Endothelial cell of umbilical vein (primary cell): ENCODE measurements at regions of chr2 and their contacts with region 1.

Region 1: DNA sequence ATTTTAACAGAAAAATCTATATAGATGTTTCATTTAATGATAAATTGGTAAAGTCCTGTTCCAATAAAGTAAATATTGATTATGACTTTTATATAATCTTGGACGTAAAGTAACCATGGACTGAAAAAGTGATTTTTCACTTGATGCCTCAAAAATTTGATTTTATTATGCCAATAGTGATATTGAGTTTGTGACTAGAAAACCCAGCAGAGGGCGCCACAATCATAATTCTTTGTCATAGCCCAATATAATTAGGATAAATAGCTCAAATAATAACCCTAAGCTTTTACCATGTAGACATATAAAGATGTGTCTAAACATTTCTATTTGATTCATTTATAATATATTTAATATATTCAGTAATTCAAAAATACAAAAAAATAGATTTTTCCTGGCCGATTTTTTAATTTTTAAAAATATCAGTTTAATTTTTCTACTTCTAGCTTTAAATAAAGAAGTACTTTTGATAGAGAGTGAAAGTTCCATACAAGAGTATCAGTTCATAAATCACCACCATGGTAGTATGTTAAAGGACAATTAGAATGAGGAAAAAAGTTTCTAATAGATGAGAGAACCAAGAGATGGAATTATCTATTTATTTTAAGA is 30.7 kb downstream of the CAMKMT start:
- DNase-seq: peak; percentile 46
- H3K4me3 ChIP-seq: no peak overlapping the region
- H3K27ac ChIP-seq: no peak overlapping the region
- H3K4me1 ChIP-seq: no peaks in the 10 kb centered on the region
- H3K27me3 ChIP-seq: no peaks in the 10 kb centered on the region
- CTCF ChIP-seq: peak; percentile 36 to 38
- POLR2A ChIP-seq: no peak

Region 2: GRCh38 chr2:44044281-44044720 is 348.1 kb before region 1 on chr2:
- CTCF ChIA-PET with region 1: interaction called, 26 read pairs
- POLR2A ChIA-PET with region 1: no interaction called
- dilution Hi-C with region 1: no loop called
- intact Hi-C with region 1: loop called (anchors 2 kb)
- DNase-seq: peak; percentile 78
- H3K4me3 ChIP-seq: no peak overlapping the region
- H3K27ac ChIP-seq: no peak overlapping the region
- H3K4me1 ChIP-seq: no peaks in the 10 kb centered on the region
- H3K27me3 ChIP-seq: peaks cover 4 to 5% of the 10 kb centered on the region in 2 experiments
- CTCF ChIP-seq: peak; percentile 87 to 95
- POLR2A ChIP-seq: no peak

Region 3: DNA sequence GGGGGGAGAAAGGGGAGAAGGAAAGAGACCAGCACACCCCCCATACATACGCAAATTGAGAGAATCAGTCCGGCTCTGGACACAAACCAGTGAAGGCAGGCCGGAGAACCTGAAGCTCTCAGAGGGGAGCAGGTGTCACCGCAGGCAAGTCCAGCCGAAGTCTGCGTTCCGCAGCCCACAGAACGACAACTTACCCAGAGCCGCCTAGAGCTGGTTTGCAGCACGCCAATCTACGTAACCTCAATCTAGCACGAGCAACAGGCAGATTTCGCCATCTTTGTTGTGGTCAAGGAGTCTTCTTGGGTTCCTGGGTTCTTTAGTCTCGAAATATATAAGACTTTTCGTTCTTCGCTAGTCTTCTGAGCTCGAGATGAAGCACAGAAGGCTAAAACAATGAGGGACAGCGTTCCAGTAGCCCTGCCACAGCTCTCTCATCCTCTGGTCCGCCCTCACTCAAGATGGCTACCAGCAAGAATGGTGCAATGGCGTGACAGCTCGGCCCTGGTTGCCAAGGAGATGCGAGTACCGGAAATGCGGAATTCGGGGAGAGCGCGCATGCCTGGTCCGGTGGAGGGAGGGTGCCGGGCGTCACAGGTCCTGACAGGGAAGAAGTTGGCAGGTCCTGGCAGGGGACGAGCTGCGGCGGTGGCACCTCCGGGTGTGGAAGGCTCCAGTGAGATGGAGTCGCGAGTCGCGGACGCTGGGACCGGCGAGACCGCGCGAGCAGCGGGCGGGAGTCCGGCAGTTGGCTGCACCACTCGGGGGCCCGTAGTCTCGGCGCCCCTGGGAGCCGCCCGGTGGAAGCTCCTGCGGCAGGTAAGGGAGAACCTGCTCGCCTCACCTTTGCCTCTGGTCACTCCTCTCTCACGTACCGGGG is 30.9 kb before region 1 on chr2 and contains the starts of genes CAMKMT and PREPL:
- CTCF ChIA-PET with region 1: interaction called, 16 read pairs
- POLR2A ChIA-PET with region 1: no interaction called
- dilution Hi-C with region 1: no loop called
- intact Hi-C with region 1: loop called (anchors 2 kb)
- DNase-seq: peak; percentile 97
- H3K4me3 ChIP-seq: peak within 1 kb of the TSS; percentile 59 to 89 (median 86)
- H3K27ac ChIP-seq: peak within 1 kb of the TSS; percentile 99
- H3K4me1 ChIP-seq: peaks cover 24% of the 10 kb centered on the region
- H3K27me3 ChIP-seq: no peaks in the 10 kb centered on the region
- CTCF ChIP-seq: no peak
- POLR2A ChIP-seq: peak; percentile 82
- total RNA-seq, gene CAMKMT: 8.2 and 10.7 TPM in 2 replicates
- total RNA-seq, gene PREPL: 25.7 and 26.0 TPM in 2 replicates

Region 4: GRCh38 chr2:44420725-44421124 is 28.3 kb after region 1 on chr2:
- CTCF ChIA-PET with region 1: interaction called, 12 read pairs
- POLR2A ChIA-PET with region 1: no interaction called
- dilution Hi-C with region 1: no loop called
- intact Hi-C with region 1: no loop called
- DNase-seq: no peak
- H3K4me3 ChIP-seq: no peak overlapping the region
- H3K27ac ChIP-seq: no peak overlapping the region
- H3K4me1 ChIP-seq: no peaks in the 10 kb centered on the region
- H3K27me3 ChIP-seq: no peaks in the 10 kb centered on the region
- CTCF ChIP-seq: no peak
- POLR2A ChIP-seq: no peak

Region 5: DNA sequence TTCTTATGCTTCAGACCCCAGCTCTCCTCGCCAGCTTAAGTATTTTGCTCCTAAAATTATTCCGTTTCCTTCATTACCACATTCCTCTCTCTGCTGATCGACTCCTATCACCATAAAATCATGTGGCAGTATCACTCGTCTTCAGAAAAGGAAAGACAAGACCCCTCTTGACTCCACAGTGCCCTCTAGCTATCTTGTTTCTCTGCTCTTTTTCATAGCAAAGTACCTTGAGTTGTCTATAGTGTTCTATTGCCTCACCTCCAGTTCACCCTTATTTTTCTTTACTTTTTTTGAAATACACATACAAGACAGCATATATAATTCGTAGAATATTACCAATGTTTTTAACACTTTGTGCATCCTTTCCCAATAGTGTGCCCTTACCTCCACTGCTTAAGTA is 275.9 kb after region 1 on chr2:
- CTCF ChIA-PET with region 1: interaction called, 11 read pairs
- POLR2A ChIA-PET with region 1: no interaction called
- dilution Hi-C with region 1: no loop called
- intact Hi-C with region 1: no loop called
- DNase-seq: peak; percentile 10
- H3K4me3 ChIP-seq: no peak overlapping the region
- H3K27ac ChIP-seq: no peak overlapping the region
- H3K4me1 ChIP-seq: no peaks in the 10 kb centered on the region
- H3K27me3 ChIP-seq: no peaks in the 10 kb centered on the region
- CTCF ChIP-seq: peak; percentile 2 to 7
- POLR2A ChIP-seq: no peak

Region 6: DNA sequence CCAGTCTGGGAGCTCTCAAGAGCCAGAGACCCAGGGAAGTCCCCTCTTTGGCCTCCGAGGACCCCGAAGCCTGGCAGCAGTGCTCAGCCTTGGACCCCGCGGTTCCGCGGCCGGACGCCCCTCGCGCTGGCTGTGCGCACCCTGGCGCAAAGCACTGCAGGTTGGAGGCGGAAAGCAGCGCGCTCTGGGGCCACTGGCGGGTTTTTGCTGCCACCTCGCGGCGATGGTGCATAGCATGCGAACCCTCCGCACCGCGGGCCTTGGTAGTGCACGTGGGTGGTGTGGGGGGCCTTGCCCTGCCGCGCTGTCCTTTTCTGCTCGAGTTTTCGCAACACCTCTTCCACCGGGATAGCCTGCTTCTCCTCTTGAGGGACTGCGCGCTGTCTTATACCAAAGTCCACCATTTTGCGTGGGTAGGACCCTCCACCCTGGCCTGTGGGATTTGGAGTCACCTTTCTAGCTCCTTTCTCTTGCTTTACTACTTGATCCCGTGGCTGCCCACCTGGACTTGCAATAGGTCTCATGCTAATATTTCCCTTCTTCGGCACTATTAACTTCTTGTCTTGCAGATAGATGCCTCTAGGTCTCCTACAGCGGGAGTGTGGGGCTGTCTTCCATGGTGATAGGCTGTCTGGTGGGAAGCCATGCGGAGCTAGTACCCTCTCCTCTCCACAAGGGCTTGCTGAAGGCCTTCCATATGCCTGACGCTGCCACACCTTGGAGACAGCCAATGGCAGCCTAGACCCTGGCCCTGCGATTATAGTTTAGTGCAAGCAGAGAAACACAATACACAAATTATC is 563.4 kb after region 1 on chr2:
- CTCF ChIA-PET with region 1: interaction called, 242 read pairs
- POLR2A ChIA-PET with region 1: interaction called, 4 read pairs
- dilution Hi-C with region 1: no loop called
- intact Hi-C with region 1: loop called (anchors 1 kb)
- DNase-seq: peak; percentile 60
- H3K4me3 ChIP-seq: no peak overlapping the region
- H3K27ac ChIP-seq: no peak overlapping the region
- H3K4me1 ChIP-seq: peaks cover 16% of the 10 kb centered on the region
- H3K27me3 ChIP-seq: peaks cover 47 to 52% of the 10 kb centered on the region in 2 experiments
- CTCF ChIP-seq: peak; percentile 86 to 97
- POLR2A ChIP-seq: no peak